ENCODE measurements at regions of chr17 and their contacts with region 1.

Region 1: GRCh38 chr17:45311760-45312476 is 4.9 kb downstream of the MAP3K14 start:
- DNase-seq: peak; percentile 24

Region 2: GRCh38 chr17:45031231-45032173 is 280.4 kb before region 1 on chr17:
- in situ Hi-C with region 1: no loop called
- DNase-seq: no peak

Region 3: DNA sequence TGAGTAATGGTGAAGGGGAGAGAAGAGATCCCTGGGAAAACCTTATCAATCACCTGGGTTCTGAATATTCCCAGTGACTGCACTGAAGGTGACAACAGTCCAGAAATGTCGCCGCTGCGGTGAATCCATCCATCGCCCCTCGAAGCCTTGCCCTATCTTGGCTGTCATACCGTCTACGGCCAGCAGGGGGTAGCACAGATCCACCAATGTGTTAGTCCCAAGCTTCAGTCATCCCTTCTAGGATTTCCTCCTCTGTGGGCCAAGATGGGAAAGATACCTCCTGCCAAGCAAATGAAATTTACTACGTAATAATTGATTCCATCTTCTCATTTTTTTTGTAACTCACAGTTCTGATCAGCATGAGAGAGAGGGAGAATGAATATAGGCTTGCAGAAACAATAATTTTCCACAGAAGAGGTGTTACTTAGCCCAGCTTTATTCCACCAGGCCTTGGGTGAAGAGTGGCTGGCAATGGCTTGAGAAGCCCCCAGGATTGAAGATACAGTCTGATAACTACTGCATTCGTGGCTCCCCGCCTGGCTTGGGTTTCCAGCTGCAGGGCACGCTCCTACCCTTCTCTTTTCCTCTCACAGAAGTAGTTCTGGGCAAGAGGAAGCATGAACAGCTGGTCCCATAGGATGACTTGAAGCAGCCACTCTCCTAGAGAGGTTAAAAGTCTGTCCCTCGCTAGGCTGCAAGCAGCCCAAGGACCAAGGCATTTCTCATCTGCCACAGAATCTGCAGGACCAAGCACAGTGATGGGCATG is 92.8 kb before region 1 on chr17:
- in situ Hi-C with region 1: no loop called
- DNase-seq: peak; percentile 91

Region 4: DNA sequence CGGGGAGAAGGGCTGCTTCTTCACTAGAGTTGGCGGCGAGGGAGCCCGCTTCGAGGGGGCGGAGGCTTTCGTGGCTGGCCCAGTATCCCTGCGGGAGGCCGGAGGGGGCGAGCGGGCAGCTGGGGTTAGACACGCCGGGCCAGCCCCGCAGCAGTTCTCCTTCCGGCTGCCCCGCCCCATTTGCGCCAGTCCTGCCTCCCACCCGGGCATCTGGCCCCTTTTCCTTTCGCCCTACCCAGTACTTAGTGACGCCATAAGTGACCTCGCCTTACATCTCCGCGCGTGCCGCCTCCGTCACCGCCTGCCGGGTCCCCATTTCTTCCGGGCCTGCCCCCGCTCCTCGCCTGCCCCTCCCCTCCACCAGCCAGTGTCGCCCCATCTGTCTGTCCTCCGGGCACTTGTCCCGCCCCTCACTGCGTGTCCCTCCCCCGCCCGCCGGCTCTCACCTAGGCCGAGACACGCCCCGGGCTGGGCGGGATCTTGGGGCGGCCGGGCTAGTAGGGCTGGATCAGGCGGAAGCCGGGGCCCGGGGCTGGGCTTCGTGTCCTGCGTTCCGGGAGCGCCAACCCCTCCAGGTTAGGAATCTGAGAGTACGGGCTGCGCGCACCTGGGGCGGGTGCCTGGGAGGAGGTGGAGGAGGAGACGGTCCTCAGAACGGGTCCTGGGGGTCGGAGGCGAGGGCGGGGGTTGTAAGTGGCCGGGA is 64.3 kb before region 1 on chr17:
- in situ Hi-C with region 1: loop called (anchors 5 kb)
- DNase-seq: peak; percentile 91

Measured in G401 (cell line).